ENCODE measurements at regions of chr17 and their contacts with region 1.

Region 1: DNA sequence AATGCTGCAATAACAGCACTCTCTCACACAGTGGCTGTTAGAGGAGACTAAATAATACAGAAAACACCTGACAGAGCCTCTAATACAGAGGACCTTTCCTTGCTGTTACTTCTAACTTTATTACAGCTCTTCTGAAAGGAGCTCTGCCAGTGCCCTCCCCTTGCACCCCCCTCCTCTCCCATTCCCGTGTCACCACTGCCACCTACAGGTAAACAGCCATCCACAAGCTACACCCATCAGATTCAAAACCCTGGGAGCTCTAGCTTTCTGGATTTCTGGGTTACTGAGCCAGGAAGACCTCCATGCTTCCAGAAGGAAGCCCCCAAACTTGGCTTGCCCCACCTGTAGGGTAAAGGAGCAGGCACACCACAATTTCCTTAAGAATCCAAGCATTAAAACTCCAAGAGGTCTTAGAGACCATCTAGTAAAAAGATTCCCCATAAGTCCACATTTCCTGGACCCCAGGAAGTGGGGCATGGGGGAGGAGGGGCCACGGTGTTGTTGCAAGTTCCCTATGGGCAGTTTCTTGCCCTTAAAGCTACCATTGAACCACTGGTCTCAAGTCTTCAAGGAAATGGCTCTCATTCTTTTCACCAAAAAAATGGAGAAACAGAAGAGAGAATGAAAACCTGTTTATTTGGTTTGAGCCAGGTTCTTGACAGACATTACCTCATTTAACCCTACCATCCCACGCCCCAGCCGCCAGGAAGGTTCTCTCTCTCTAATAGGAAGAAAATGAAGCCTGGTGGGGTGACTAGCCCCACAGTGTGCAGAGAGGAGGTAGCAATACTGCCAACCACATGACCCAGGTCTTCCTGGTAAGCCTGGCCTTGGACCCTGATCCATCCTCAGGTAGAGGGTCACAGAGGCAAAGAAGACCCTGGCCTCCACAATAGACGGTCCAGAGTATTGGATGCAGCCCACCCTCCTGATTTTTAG is 52.8 kb downstream of the TOM1L2 start:
- DNase-seq: peak; percentile 82
- H3K4me3 Mint-ChIP-seq: no peak overlapping the region
- H3K27ac Mint-ChIP-seq: no peak overlapping the region
- H3K4me1 Mint-ChIP-seq: peaks cover 16% of the 10 kb centered on the region
- H3K27me3 Mint-ChIP-seq: no peaks in the 10 kb centered on the region

Region 2: GRCh38 chr17:17696882-17697665 is 222.4 kb before region 1 on chr17:
- CTCF ChIA-PET with region 1: no interaction called
- intact Hi-C with region 1: no loop called
- DNase-seq: no peak
- H3K4me3 Mint-ChIP-seq: no peak overlapping the region
- H3K27ac Mint-ChIP-seq: peak overlapping the region; percentile 8
- H3K4me1 Mint-ChIP-seq: peaks cover 47% of the 10 kb centered on the region
- H3K27me3 Mint-ChIP-seq: no peaks in the 10 kb centered on the region

Region 3: GRCh38 chr17:17712268-17712924 is 207.0 kb before region 1 on chr17:
- CTCF ChIA-PET with region 1: no interaction called
- intact Hi-C with region 1: no loop called
- DNase-seq: no peak
- H3K4me3 Mint-ChIP-seq: no peak overlapping the region
- H3K27ac Mint-ChIP-seq: no peak overlapping the region
- H3K4me1 Mint-ChIP-seq: peaks cover 26% of the 10 kb centered on the region
- H3K27me3 Mint-ChIP-seq: no peaks in the 10 kb centered on the region

Region 4: DNA sequence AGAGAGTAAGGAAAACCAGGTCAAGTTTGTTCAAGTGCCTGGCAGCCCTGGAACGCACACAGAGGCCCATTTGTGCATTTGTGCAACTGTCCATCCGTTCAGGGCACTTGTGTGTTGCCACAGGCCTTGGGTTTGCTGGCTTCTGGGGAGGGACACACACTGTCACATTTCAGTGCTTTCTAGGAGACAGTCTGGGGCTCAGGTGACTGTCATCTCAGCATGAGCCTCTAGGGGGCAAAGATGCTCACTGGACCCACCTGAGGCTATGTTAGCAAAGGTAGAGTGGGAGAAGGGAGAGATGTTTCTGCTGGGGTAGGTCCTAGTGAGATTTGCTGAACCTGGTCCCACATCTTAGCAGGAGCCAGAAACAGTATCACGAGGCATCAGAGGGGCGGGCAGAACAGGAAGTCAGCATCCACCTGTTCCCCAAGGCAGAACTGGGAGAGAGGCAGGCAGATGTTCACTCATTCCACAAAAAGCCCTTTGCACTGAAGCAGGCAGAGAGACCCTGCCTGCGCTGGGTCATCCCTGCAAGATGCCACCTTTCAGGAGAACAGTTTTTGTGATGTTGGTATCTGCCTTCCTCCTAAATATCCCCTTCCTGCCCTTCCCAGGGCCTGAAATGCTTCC is 189.7 kb before region 1 on chr17:
- CTCF ChIA-PET with region 1: no interaction called
- intact Hi-C with region 1: loop called (anchors 1 kb)
- DNase-seq: peak; percentile 78
- H3K4me3 Mint-ChIP-seq: no peak overlapping the region
- H3K27ac Mint-ChIP-seq: no peak overlapping the region
- H3K4me1 Mint-ChIP-seq: peaks cover 21% of the 10 kb centered on the region
- H3K27me3 Mint-ChIP-seq: no peaks in the 10 kb centered on the region

Region 5: GRCh38 chr17:17890773-17891759 is 28.4 kb before region 1 on chr17:
- CTCF ChIA-PET with region 1: interaction called, 13 read pairs
- intact Hi-C with region 1: loop called (anchors 1 kb)
- DNase-seq: peak; percentile 75
- H3K4me3 Mint-ChIP-seq: no peak overlapping the region
- H3K27ac Mint-ChIP-seq: no peak overlapping the region
- H3K4me1 Mint-ChIP-seq: peaks cover 2% of the 10 kb centered on the region
- H3K27me3 Mint-ChIP-seq: no peaks in the 10 kb centered on the region

Region 6: DNA sequence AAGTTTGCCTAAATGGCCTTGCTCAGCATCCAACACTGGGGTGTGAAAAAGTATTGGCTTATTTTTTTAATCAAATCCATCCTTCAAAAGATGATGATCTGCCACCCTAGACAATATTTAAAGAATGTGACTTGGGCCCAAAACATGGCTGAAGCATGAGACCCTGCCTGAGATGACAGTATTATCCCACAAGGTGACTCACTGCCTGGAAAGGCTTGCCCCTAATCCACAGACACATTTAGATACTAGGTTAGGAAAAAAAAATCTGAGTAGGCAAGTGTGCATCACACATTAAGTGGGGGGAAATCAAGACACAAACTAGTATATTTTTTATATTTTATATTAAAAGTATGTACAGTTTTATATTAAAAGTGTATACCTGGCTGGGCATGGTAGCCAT is 14.3 kb after region 1 on chr17:
- CTCF ChIA-PET with region 1: interaction called, 15 read pairs
- intact Hi-C with region 1: no loop called
- DNase-seq: no peak
- H3K4me3 Mint-ChIP-seq: no peak overlapping the region
- H3K27ac Mint-ChIP-seq: no peak overlapping the region
- H3K4me1 Mint-ChIP-seq: peaks cover 38% of the 10 kb centered on the region
- H3K27me3 Mint-ChIP-seq: no peaks in the 10 kb centered on the region

Region 7: DNA sequence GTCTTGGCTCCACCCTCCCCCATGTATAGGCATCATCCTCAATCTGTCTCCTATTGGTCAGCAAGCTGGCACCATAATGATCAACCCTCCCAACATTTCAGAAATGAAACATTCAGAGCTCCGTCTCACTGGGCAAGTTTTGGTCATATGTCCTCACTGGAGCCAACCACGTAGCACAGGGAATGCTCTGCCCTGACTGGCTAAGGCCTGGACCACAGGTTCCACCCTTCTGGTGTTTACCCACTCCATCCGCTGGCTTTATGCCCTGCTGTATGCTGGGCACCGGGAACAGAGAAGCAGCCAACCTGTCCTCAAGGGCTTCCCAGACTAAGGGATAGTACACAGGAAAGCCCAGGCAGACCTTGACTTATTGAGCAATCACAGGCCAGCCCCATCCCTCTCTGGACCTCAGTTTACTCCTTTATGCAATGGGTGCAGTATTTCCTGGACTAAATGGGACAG is 209.6 kb after region 1 on chr17:
- CTCF ChIA-PET with region 1: no interaction called
- intact Hi-C with region 1: no loop called
- DNase-seq: no peak
- H3K4me3 Mint-ChIP-seq: no peak overlapping the region
- H3K27ac Mint-ChIP-seq: no peak overlapping the region
- H3K4me1 Mint-ChIP-seq: no peaks in the 10 kb centered on the region
- H3K27me3 Mint-ChIP-seq: no peaks in the 10 kb centered on the region

Measured in activated naive CD4-positive, alpha-beta T cell treated with anti-CD3 and anti-CD28 coated beads for 36 hours (primary cell).